ENCODE measurements at regions of chr11 and their contacts with region 1.

Region 1: DNA sequence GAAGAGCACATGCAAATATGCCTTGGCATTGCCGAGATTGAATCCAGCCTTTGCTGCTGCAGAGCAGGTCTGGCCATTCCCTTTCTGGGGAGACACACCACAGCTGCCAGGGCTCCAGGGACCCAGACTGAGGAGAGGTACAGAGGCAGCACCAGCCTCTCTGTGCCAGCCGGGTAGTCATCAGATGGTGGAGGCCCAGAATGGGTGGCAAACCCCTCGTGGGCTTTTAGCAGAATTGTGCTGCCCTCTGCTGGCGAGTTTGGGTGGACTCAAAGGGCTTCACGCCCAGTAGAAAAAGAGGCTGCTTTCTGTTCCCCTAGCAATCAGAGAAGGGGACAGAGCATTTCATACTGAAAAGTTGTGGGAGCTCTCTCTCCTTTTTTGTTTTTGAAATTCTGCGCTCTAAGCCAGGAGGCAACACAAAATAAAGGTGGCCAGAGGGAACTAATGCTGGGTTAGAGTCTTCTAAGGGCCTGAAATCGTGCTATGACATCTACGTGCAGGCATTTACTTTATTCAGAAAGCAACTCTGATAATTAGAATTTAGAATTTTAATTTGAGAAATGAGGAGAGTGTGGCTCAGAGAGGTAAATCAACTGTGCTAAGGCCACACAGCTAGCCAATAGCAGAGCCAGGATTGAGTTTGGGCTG is 158.8 kb upstream of the NAV2 start:
- DNase-seq: peak; percentile 88
- H3K4me3 ChIP-seq: no peak overlapping the region
- H3K27ac ChIP-seq: no peak overlapping the region
- H3K4me1 ChIP-seq: peaks cover 0 to 23% (median 3%) of the 10 kb centered on the region in 4 donors
- H3K27me3 ChIP-seq: no peaks in the 10 kb centered on the region
- CTCF ChIP-seq: peak; percentile 87 to 90 (median 88)
- EP300 ChIP-seq: no peak
- POLR2A ChIP-seq: no peak

Region 2: DNA sequence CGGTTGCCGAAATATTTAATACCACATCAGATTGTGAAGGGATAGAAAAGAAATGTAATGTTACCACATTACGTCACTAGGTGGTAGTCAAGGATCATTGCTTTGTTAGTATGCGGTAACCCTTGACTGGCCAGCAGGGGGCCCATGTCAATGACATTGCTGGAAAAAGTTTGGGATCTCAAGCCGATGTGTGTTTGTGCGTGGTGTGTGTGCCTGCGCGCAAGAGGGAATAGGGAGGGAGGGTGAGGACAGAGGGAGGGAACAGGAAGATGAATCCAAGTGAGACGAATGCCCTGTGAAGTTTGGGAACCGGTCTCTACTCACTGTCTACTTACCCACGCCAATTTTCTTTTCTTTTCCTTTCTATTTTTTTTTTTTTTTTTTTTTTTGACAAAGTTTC is 482.6 kb before region 1 on chr11:
- in situ Hi-C with region 1: loop called (anchors 10 to 25 kb)
- intact Hi-C with region 1: loop called (anchors 10 kb)
- DNase-seq: peak; percentile 75
- H3K4me3 ChIP-seq: no peak overlapping the region
- H3K27ac ChIP-seq: peak overlapping the region in 1 of 4 donors; percentile 83
- H3K4me1 ChIP-seq: peaks cover 0 to 24% (median 20%) of the 10 kb centered on the region in 4 donors
- H3K27me3 ChIP-seq: peaks cover 13% of the 10 kb centered on the region
- CTCF ChIP-seq: peak; percentile 84 to 99 (median 89)
- EP300 ChIP-seq: no peak
- POLR2A ChIP-seq: no peak

Region 3: GRCh38 chr11:19311308-19312030 is 242.3 kb before region 1 on chr11:
- in situ Hi-C with region 1: loop called in 3 of 4 experiments (anchors 10 to 25 kb)
- intact Hi-C with region 1: loop called (anchors 2 kb)
- DNase-seq: peak; percentile 74
- H3K4me3 ChIP-seq: no peak overlapping the region
- H3K27ac ChIP-seq: no peak overlapping the region
- H3K4me1 ChIP-seq: peaks cover under 1 to 12% (median under 1%) of the 10 kb centered on the region in 4 donors
- H3K27me3 ChIP-seq: no peaks in the 10 kb centered on the region
- CTCF ChIP-seq: peak; percentile 65 to 80 (median 75)
- EP300 ChIP-seq: no peak
- POLR2A ChIP-seq: no peak

Region 4: GRCh38 chr11:19903620-19904069 is 349.8 kb after region 1 on chr11:
- in situ Hi-C with region 1: no loop called
- intact Hi-C with region 1: loop called (anchors 5 kb)
- DNase-seq: peak; percentile 82
- H3K4me3 ChIP-seq: no peak overlapping the region
- H3K27ac ChIP-seq: no peak overlapping the region
- H3K4me1 ChIP-seq: peaks cover 0 to 4% (median 0%) of the 10 kb centered on the region in 4 donors
- H3K27me3 ChIP-seq: no peaks in the 10 kb centered on the region
- CTCF ChIP-seq: peak; percentile 71 to 79 (median 78)
- EP300 ChIP-seq: no peak
- POLR2A ChIP-seq: no peak

Region 5: DNA sequence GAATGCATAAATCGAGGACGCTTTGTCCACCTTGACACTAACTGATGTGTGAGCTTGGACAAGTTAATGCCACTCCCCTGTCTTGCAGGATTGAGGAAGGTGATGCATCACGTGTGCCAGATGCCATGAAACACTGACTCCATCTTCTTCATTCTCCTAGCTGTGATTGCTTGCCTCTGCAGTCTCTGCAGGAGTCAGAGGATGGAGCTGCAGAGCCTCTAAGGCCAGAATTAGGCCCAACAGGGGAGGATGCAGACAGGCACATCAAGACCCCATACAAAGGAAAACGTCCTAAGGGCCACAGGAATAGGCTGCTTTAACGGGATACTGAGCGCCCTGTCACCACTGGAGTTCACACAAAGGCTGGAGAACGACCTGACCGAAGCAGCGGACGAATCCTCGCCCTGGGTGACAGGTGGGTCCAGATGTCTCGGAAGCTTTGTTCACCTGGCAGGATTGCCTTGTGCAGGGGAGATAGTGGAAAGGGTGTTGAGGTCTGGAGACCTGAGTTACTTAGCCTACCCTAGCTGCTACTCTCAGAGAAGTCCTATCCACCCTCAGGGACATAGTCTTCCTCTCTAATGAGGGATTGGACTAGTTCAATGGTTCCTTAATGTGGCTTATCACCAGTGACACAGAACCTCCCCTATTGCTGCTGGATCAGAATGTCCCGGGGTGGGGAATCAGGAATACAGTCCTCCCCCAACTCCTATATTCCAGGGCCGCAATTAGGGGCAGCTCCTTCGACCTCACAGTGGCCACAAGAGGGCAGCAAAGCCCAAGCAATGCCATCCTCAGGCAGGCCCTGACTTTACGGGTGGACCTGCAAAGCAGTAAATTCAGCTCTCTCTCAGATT is 574.1 kb after region 1 on chr11:
- in situ Hi-C with region 1: no loop called
- intact Hi-C with region 1: loop called (anchors 5 kb)
- DNase-seq: peak; percentile 85
- H3K4me3 ChIP-seq: no peak overlapping the region
- H3K27ac ChIP-seq: no peak overlapping the region
- H3K4me1 ChIP-seq: peaks cover 0 to 23% (median 3%) of the 10 kb centered on the region in 4 donors
- H3K27me3 ChIP-seq: peaks cover 4% of the 10 kb centered on the region
- CTCF ChIP-seq: peak; percentile 79 to 88 (median 84)
- EP300 ChIP-seq: no peak
- POLR2A ChIP-seq: no peak